HepG2 (cell line): ENCODE measurements at regions of chr16 and their contacts with region 1.

Region 1: DNA sequence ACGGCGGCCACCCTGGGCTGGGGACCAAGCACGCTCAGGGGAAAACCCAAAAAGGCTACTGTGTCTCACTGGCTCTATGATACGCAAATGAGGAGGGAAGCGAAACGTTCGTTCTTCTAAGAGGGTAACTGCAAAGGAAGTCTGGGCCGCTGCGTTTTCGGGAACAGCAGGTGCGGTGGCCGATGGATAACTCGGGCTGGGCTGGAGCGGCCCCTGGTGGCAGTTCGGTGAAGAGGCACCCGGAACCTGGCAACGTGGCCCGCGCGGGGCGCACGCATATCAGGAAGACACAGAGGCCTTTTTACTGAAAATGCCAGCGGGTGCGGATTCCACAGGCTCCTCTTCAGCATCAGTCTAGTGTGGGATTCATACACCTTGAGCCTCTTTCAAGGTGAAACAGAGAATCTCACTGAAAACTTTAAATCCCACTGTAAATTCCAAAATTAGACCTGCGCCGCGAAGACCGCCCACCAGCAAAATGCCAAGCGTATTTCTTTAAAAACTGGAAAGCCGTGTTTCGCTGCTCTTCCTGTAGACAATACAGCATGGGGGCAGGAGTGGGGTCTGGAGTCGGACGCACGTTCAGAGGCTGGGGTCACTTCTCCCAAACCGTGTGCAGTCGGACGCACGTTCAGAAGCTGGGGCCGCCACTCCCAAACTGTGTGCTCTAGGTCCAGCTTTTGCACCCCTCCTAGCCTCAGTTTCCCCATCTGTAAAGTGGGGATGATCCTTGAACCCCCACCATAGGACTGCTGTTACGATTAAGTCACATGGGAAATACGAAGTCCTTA is 44.4 kb upstream of the METTL9 start:
- DNase-seq: peak; percentile 83
- ATAC-seq: peak; percentile 80
- H3K4me3 ChIP-seq: peak overlapping the region; percentile 1 to 55 (median 2); a peak in 4 of 6 replicates
- H3K27ac ChIP-seq: no peak overlapping the region
- H3K4me1 ChIP-seq: peaks cover 31% of the 10 kb centered on the region
- H3K27me3 ChIP-seq: peaks cover 16 to 58% of the 10 kb centered on the region in 2 experiments; a peak in 4 of 5 replicates
- CTCF ChIP-seq: peak; percentile 100
- EP300 ChIP-seq: peak in 1 of 2 experiments; percentile 69; a peak in 1 of 4 replicates
- POLR2A ChIP-seq: no peak
- RAD21 ChIP-seq: peak; percentile 100

Region 2: GRCh38 chr16:21126518-21126917 is 428.5 kb before region 1 on chr16:
- CTCF ChIA-PET with region 1: no interaction called
- POLR2A ChIA-PET with region 1: no interaction called
- in situ Hi-C with region 1: no loop called
- intact Hi-C with region 1: no loop called
- DNase-seq: no peak
- ATAC-seq: no peak
- H3K4me3 ChIP-seq: no peak overlapping the region
- H3K27ac ChIP-seq: no peak overlapping the region
- H3K4me1 ChIP-seq: no peaks in the 10 kb centered on the region
- H3K27me3 ChIP-seq: peaks cover 2 to 17% of the 10 kb centered on the region in 2 experiments; a peak in 2 of 5 replicates
- CTCF ChIP-seq: no peak
- EP300 ChIP-seq: no peak
- POLR2A ChIP-seq: no peak
- RAD21 ChIP-seq: no peak

Region 3: DNA sequence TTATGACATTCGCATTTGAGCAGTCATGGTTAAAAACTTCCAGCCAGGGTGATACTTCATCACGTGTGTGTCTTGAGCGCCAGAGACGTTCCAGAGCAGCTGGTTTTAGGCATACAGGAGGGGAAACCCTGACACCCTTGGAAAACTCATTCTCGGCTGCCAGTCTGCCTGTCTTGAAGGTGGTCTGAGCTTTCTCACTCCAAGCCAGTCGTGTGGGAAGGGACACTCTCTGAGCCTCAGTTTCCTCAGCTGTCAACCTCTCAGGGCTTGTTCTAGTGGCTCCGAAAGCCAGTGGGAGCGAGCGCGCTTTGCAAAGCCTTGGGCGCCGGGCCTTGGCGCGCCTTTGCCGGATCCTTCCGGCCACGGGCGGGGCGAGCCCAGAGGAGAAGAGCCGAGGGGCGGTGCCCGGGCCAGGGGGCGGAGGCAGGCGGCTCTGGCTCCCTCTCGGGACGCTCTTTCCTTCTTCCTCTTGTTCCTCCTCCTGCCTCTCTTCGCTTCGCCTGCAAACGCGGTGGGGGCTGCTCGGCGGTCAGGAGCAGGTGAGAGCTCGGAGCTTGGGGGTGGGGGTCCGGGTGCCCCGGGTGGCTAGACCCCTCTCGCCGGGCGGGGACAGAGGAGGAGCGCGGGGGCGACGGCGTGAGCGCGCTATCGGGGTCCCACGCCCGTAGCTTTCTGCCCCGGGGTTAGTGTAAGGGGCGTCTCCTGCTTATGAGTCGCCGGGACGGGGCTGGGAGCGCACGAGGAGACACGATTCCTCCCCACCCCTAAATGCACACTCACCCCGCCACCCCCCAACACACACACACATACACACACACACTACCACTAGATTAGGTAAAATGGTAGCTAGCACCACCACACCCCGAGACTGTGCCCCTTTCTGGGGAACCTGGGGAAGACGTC is 396.5 kb before region 1 on chr16 and contains the start of gene LDAF1:
- CTCF ChIA-PET with region 1: interaction called, 5 read pairs
- POLR2A ChIA-PET with region 1: no interaction called
- in situ Hi-C with region 1: loop called (anchors 5 kb)
- intact Hi-C with region 1: loop called (anchors 10 kb)
- DNase-seq: peak; percentile 33
- ATAC-seq: peak; percentile 93
- H3K4me3 ChIP-seq: peak within 1 kb of the TSS; percentile 79 to 88 (median 80)
- H3K27ac ChIP-seq: no peak within 1 kb of the TSS
- H3K4me1 ChIP-seq: peaks cover 33% of the 10 kb centered on the region
- H3K27me3 ChIP-seq: peaks cover 2 to 18% of the 10 kb centered on the region in 2 experiments; a peak in 2 of 5 replicates
- CTCF ChIP-seq: peak; percentile 40; the same call in 1 of the 2 replicates
- EP300 ChIP-seq: peak in 1 of 2 experiments; percentile 32; a peak in 2 of 4 replicates
- POLR2A ChIP-seq: no peak
- RAD21 ChIP-seq: peak; percentile 48; the same call in 1 of the 2 replicates
- total RNA-seq, gene LDAF1: 6.3 and 8.3 TPM in 2 replicates

Region 4: GRCh38 chr16:21283521-21284289 is 271.3 kb before region 1 on chr16:
- CTCF ChIA-PET with region 1: no interaction called
- POLR2A ChIA-PET with region 1: no interaction called
- in situ Hi-C with region 1: no loop called
- intact Hi-C with region 1: loop called (anchors 10 kb)
- DNase-seq: peak; percentile 51
- ATAC-seq: peak; percentile 99
- H3K4me3 ChIP-seq: peak overlapping the region; percentile 64 to 77 (median 74)
- H3K27ac ChIP-seq: no peak overlapping the region
- H3K4me1 ChIP-seq: peaks cover 13% of the 10 kb centered on the region
- H3K27me3 ChIP-seq: peaks cover 0 to 18% of the 10 kb centered on the region in 2 experiments; a peak in 4 of 5 replicates
- CTCF ChIP-seq: peak; percentile 85
- EP300 ChIP-seq: no peak
- POLR2A ChIP-seq: no peak
- RAD21 ChIP-seq: peak; percentile 73

Region 5: DNA sequence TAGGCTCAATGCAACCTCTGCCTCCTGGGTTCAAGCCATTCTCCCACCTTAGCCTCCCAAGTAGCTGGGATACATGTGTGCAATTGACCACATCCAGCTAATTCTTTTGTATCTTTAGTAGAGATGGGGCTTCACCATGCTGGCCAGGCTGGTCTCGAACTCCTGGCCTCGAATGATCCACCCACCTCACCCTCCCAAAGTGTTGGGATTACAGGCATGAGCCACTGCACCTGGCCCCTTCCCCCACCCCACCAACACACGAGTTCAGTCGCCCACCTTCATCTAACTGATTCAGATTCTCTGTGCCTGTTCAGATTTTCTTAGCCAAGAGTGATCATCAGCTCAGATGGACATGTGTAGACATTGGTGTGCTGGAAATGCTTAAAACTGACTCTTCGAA is 19.4 kb after region 1 on chr16:
- CTCF ChIA-PET with region 1: no interaction called
- POLR2A ChIA-PET with region 1: no interaction called
- in situ Hi-C with region 1: no loop called
- intact Hi-C with region 1: loop called (anchors 2 kb)
- DNase-seq: no peak
- ATAC-seq: no peak
- H3K4me3 ChIP-seq: no peak overlapping the region
- H3K27ac ChIP-seq: no peak overlapping the region
- H3K4me1 ChIP-seq: no peaks in the 10 kb centered on the region
- H3K27me3 ChIP-seq: peaks cover 3 to 20% of the 10 kb centered on the region in 2 experiments; a peak in 4 of 5 replicates
- CTCF ChIP-seq: no peak
- EP300 ChIP-seq: no peak
- POLR2A ChIP-seq: no peak
- RAD21 ChIP-seq: no peak

Region 6: DNA sequence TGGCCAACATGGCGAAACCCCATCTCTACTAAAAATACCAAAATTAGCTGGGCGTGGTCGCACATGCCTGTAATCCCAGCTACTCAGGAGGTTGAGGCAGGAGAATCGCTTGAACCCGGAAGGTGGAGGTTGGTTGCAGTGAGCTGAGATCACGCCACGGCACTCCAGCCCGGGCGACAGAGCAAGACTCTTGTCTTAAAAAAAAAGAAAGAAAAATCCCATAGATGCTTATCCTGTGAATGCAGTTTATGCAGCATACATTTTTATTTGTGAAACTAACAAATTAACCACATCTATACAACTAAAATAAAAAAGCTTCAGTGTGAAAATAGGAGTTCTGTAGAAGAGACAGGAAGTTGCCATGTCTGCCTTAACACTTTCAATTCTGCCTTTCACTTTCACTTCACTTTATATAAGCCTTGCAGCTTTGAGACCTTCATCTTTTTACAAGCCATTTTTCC is 90.3 kb after region 1 on chr16:
- CTCF ChIA-PET with region 1: interaction called, 15 read pairs
- POLR2A ChIA-PET with region 1: no interaction called
- in situ Hi-C with region 1: no loop called
- intact Hi-C with region 1: no loop called
- DNase-seq: no peak
- ATAC-seq: no peak
- H3K4me3 ChIP-seq: no peak overlapping the region
- H3K27ac ChIP-seq: no peak overlapping the region
- H3K4me1 ChIP-seq: peaks cover 23% of the 10 kb centered on the region
- H3K27me3 ChIP-seq: no peaks in the 10 kb centered on the region
- CTCF ChIP-seq: no peak
- EP300 ChIP-seq: no peak
- POLR2A ChIP-seq: no peak
- RAD21 ChIP-seq: no peak

Region 7: GRCh38 chr16:21727344-21727743 is 172.4 kb after region 1 on chr16:
- CTCF ChIA-PET with region 1: no interaction called
- POLR2A ChIA-PET with region 1: no interaction called
- in situ Hi-C with region 1: no loop called
- intact Hi-C with region 1: no loop called
- DNase-seq: no peak
- ATAC-seq: no peak
- H3K4me3 ChIP-seq: no peak overlapping the region
- H3K27ac ChIP-seq: no peak overlapping the region
- H3K4me1 ChIP-seq: no peaks in the 10 kb centered on the region
- H3K27me3 ChIP-seq: peaks cover 0 to 23% of the 10 kb centered on the region in 2 experiments; a peak in 2 of 5 replicates
- CTCF ChIP-seq: no peak
- EP300 ChIP-seq: no peak
- POLR2A ChIP-seq: no peak
- RAD21 ChIP-seq: no peak

Region 8: GRCh38 chr16:22346483-22346882 is 791.5 kb after region 1 on chr16:
- CTCF ChIA-PET with region 1: no interaction called
- POLR2A ChIA-PET with region 1: no interaction called
- in situ Hi-C with region 1: loop called (anchors 25 kb)
- intact Hi-C with region 1: no loop called
- DNase-seq: no peak
- ATAC-seq: 0 out of 3 replicates have a peak, but pooled peaks have one; percentile 17
- H3K4me3 ChIP-seq: no peak overlapping the region
- H3K27ac ChIP-seq: no peak overlapping the region
- H3K4me1 ChIP-seq: no peaks in the 10 kb centered on the region
- H3K27me3 ChIP-seq: no peaks in the 10 kb centered on the region
- CTCF ChIP-seq: no peak
- EP300 ChIP-seq: no peak
- POLR2A ChIP-seq: no peak
- RAD21 ChIP-seq: no peak